Panc1 (cell line): ENCODE measurements at regions of chr1 and their contacts with region 1.

Region 1: GRCh38 chr1:202348509-202349205 is at the start of gene PPP1R12B:
- DNase-seq: peak; percentile 97
- ATAC-seq: peak; percentile 100
- H3K4me3 ChIP-seq: peak within 1 kb of the TSS; percentile 83 to 92
- H3K27ac ChIP-seq: peak within 1 kb of the TSS; percentile 80
- H3K4me1 ChIP-seq: peaks cover 9% of the 10 kb centered on the region; the same call in 1 of the 2 replicates
- H3K27me3 ChIP-seq: no peaks in the 10 kb centered on the region
- CTCF ChIP-seq: no peak
- total RNA-seq, gene PPP1R12B: 13.1 TPM

Region 2: GRCh38 chr1:202405928-202406327 is 57.3 kb after region 1 on chr1:
- CTCF ChIA-PET with region 1: interaction called, 11 read pairs
- POLR2A ChIA-PET with region 1: interaction called, 7 read pairs
- in situ Hi-C with region 1: no loop called
- intact Hi-C with region 1: no loop called
- DNase-seq: no peak
- ATAC-seq: no peak
- H3K4me3 ChIP-seq: no peak overlapping the region
- H3K27ac ChIP-seq: no peak overlapping the region
- H3K4me1 ChIP-seq: no peaks in the 10 kb centered on the region; the same call in 1 of the 2 replicates
- H3K27me3 ChIP-seq: no peaks in the 10 kb centered on the region
- CTCF ChIP-seq: no peak

Region 3: GRCh38 chr1:202700061-202700460 is 351.4 kb after region 1 on chr1:
- CTCF ChIA-PET with region 1: interaction called, 15 read pairs
- POLR2A ChIA-PET with region 1: no interaction called
- in situ Hi-C with region 1: no loop called
- intact Hi-C with region 1: no loop called
- DNase-seq: no peak
- ATAC-seq: no peak
- H3K4me3 ChIP-seq: no peak overlapping the region
- H3K27ac ChIP-seq: no peak overlapping the region
- H3K4me1 ChIP-seq: no peaks in the 10 kb centered on the region
- H3K27me3 ChIP-seq: peaks cover 39% of the 10 kb centered on the region
- CTCF ChIP-seq: no peak

Region 4: GRCh38 chr1:202716654-202717053 is 368.0 kb after region 1 on chr1:
- CTCF ChIA-PET with region 1: interaction called, 8 read pairs
- POLR2A ChIA-PET with region 1: no interaction called
- in situ Hi-C with region 1: no loop called
- intact Hi-C with region 1: loop called (anchors 5 kb)
- DNase-seq: no peak
- ATAC-seq: no peak
- H3K4me3 ChIP-seq: no peak overlapping the region
- H3K27ac ChIP-seq: no peak overlapping the region
- H3K4me1 ChIP-seq: no peaks in the 10 kb centered on the region
- H3K27me3 ChIP-seq: no peaks in the 10 kb centered on the region; the same call in 1 of the 2 replicates
- CTCF ChIP-seq: no peak